ENCODE measurements at regions of chr18 and their contacts with region 1.

Region 1: GRCh38 chr18:77061946-77062517 is 70.6 kb downstream of the MBP start:
- DNase-seq: no peak
- ATAC-seq: peak; percentile 65
- H3K4me3 ChIP-seq: peak overlapping the region; percentile 2; the same call in 1 of the 2 replicates
- H3K27ac ChIP-seq: peak overlapping the region; percentile 97
- H3K4me1 ChIP-seq: peaks cover 61% of the 10 kb centered on the region
- H3K27me3 ChIP-seq: no peaks in the 10 kb centered on the region
- CTCF ChIP-seq: peak in 2 of 3 experiments; percentile 16 to 26; a peak in 2 of 6 replicates
- EP300 ChIP-seq: no peak
- POLR2A ChIP-seq: no peak; the same call in 1 of the 2 replicates
- RAD21 ChIP-seq: peak; percentile 24; the same call in 1 of the 2 replicates

Region 2: DNA sequence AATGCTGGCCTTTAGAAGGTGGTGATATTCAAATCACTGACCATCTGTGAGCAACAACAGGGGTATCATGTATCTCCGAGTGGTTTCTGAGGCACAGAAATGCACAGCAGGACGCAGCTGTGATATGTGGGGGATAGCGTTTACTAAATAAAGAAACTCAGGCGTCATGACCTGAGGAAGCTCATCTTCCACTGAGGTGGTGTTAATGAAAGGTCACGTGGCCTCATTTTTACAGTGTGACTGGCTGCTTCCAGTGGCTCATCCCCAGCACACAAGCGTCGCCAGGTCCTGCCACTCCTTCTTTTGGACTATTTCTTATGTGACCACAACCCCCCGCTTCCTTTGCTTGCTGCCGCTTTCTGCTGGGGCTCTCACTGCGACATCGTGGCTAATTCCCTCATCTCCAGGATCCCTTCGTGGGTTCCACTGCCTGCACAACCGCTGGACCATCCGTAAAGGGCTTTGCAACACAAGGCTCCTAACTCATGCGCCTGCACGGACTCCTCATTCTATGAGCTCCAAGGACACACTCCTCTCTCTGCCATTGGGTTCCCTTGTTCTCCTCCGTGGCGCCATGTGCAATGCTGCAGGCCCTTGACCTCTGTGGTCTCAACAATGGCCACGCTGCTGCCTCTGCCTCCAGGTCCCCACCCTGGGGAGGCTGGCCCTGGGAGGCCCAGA is 38.8 kb before region 1 on chr18:
- CTCF ChIA-PET with region 1: no interaction called
- POLR2A ChIA-PET with region 1: no interaction called
- RAD21 ChIA-PET with region 1: no interaction called
- SMC1A ChIA-PET with region 1: no interaction called
- in situ Hi-C with region 1: no loop called
- intact Hi-C with region 1: no loop called
- DNase-seq: no peak
- ATAC-seq: no peak; the same call in 2 of the 3 replicates
- H3K4me3 ChIP-seq: no peak overlapping the region
- H3K27ac ChIP-seq: no peak overlapping the region
- H3K4me1 ChIP-seq: no peaks in the 10 kb centered on the region
- H3K27me3 ChIP-seq: no peaks in the 10 kb centered on the region
- CTCF ChIP-seq: no peak
- EP300 ChIP-seq: no peak
- POLR2A ChIP-seq: no peak
- RAD21 ChIP-seq: no peak

Region 3: GRCh38 chr18:77114415-77115191 is 52.6 kb after region 1 on chr18:
- CTCF ChIA-PET with region 1: interaction called, 6 read pairs
- POLR2A ChIA-PET with region 1: interaction called, 3 read pairs
- RAD21 ChIA-PET with region 1: interaction called, 10 read pairs
- SMC1A ChIA-PET with region 1: interaction called, 8 read pairs
- in situ Hi-C with region 1: no loop called
- intact Hi-C with region 1: no loop called
- DNase-seq: no peak
- ATAC-seq: peak; percentile 92
- H3K4me3 ChIP-seq: no peak overlapping the region
- H3K27ac ChIP-seq: no peak overlapping the region; the same call in 1 of the 2 replicates
- H3K4me1 ChIP-seq: peaks cover 4% of the 10 kb centered on the region
- H3K27me3 ChIP-seq: no peaks in the 10 kb centered on the region
- CTCF ChIP-seq: no peak
- EP300 ChIP-seq: no peak
- POLR2A ChIP-seq: peak; percentile 8; the same call in 1 of the 2 replicates
- RAD21 ChIP-seq: no peak

Region 4: GRCh38 chr18:77433076-77433475 is 371.0 kb after region 1 on chr18:
- CTCF ChIA-PET with region 1: no interaction called
- POLR2A ChIA-PET with region 1: no interaction called
- RAD21 ChIA-PET with region 1: no interaction called
- SMC1A ChIA-PET with region 1: no interaction called
- in situ Hi-C with region 1: no loop called
- intact Hi-C with region 1: no loop called
- DNase-seq: no peak
- ATAC-seq: no peak
- H3K4me3 ChIP-seq: no peak overlapping the region
- H3K27ac ChIP-seq: no peak overlapping the region
- H3K4me1 ChIP-seq: no peaks in the 10 kb centered on the region
- H3K27me3 ChIP-seq: no peaks in the 10 kb centered on the region
- CTCF ChIP-seq: no peak
- EP300 ChIP-seq: no peak
- POLR2A ChIP-seq: no peak
- RAD21 ChIP-seq: no peak

Measured in GM12878 (cell line).